Heart left ventricle (tissue), 16 donors: ENCODE measurements at regions of chr5 and their contacts with region 1.

Region 1: DNA sequence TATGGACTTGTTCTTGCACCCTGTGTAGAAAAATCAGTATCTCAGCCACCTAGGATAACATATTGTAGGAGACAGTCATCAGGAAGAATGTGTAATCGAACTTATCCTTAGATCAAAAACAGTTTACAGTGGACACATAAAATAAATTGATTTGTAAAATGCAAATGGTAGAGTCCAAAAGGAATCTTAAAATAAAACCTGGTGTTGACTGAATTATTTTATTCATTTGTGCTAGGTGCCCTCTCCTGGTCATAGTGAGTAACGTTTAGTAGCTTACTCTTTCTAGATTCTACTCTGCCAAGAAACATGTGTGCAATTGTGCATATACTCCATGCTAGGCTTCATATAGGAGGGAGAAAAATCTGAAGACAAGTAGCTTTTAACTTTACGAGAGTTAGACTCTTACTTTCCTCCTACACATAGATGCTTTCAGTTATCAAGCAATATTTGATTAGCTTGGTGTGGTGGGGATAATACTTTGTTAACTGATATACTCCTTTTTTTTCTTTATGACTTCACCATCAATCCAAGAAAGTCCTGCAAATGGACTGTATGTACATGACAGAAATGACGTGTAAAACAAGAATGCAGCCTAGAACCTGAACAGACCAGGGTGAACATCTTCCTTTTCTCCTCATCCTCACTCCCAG is 23.7 kb upstream of the LOX start:
- DNase-seq: no peak
- ATAC-seq: no peak
- H3K4me3 ChIP-seq: no peak overlapping the region
- H3K27ac ChIP-seq: no peak overlapping the region
- H3K4me1 ChIP-seq: no peaks in the 10 kb centered on the region
- H3K27me3 ChIP-seq: peaks cover 0 to 4% (median 0%) of the 10 kb centered on the region in 9 donors
- CTCF ChIP-seq: peak; percentile 31 to 67 (median 53)
- POLR2A ChIP-seq: no peak

Region 2: GRCh38 chr5:121962347-121962670 is 139.5 kb before region 1 on chr5:
- intact Hi-C with region 1: loop called in 2 of 10 experiments (anchors 2 to 5 kb)
- DNase-seq: no peak
- ATAC-seq: peak in 1 of 4 donors; percentile 6
- H3K4me3 ChIP-seq: peak overlapping the region; percentile 55 to 87 (median 76)
- H3K27ac ChIP-seq: peak overlapping the region in 11 of 12 donors; percentile 13 to 79 (median 48)
- H3K4me1 ChIP-seq: peaks cover 0 to 21% (median 13%) of the 10 kb centered on the region in 12 donors
- H3K27me3 ChIP-seq: peaks cover 0 to 10% (median 0%) of the 10 kb centered on the region in 9 donors
- CTCF ChIP-seq: no peak
- POLR2A ChIP-seq: no peak